Transverse colon (tissue), 4 donors: ENCODE measurements at regions of chrX and their contacts with region 1.

Region 1: GRCh38 chrX:11992271-11992670 is 146.0 kb upstream of the FRMPD4 start:
- DNase-seq: no peak
- H3K4me3 ChIP-seq: no peak overlapping the region
- H3K27ac ChIP-seq: no peak overlapping the region
- H3K4me1 ChIP-seq: no peaks in the 10 kb centered on the region
- H3K27me3 ChIP-seq: no peaks in the 10 kb centered on the region
- CTCF ChIP-seq: no peak
- EP300 ChIP-seq: no peak
- POLR2A ChIP-seq: no peak

Region 2: DNA sequence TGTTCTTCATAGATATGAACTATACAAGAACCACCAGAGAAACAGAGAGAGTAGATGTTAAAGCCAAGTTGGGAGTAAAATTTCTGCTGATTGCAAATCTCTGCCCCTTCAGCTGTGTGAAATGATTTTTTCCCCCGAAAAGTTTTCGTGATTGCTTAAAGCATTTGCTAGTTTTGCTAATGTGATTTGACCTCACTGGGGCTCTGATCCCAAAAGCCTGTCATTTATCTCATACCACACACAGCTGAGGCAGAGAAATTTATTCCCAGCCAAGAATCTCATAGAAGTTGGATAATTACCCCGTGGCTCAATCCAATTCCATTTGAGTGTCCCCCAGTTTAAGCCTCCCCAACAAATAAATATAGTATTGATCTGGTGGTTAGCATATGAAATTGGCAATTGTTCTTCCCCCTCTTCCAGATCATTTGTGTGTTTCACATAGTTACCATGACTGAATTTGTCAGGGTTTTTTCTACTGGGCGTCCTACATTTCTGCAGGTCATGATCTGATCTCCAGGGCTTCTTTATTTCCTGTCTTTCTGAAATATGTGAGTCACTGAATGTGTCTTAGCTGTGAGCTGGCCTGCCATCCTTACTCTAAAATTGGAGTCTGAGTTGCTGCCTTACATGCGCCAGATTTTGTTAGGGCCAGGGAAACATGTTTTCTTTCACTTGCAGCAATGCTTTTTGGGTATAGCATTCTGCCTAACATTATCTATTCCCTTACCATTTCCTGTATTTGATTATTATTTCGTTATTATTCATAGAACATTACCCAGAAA is 21.5 kb before region 1 on chrX:
- in situ Hi-C with region 1: no loop called
- intact Hi-C with region 1: loop called (anchors 1 kb)
- DNase-seq: no peak
- H3K4me3 ChIP-seq: no peak overlapping the region
- H3K27ac ChIP-seq: no peak overlapping the region
- H3K4me1 ChIP-seq: no peaks in the 10 kb centered on the region
- H3K27me3 ChIP-seq: no peaks in the 10 kb centered on the region
- CTCF ChIP-seq: no peak
- EP300 ChIP-seq: no peak
- POLR2A ChIP-seq: no peak